WTC11 (cell line): ENCODE measurements at regions of chr10 and their contacts with region 1.

Region 1: GRCh38 chr10:69092959-69093850 is 5.3 kb downstream of the SRGN start:
- DNase-seq: peak; percentile 74
- ATAC-seq: peak; percentile 94
- H3K4me3 Mint-ChIP-seq: no peak overlapping the region
- H3K27ac Mint-ChIP-seq: no peak overlapping the region
- H3K4me1 Mint-ChIP-seq: no peaks in the 10 kb centered on the region
- H3K27me3 Mint-ChIP-seq: no peaks in the 10 kb centered on the region
- CTCF ChIP-seq: peak; percentile 58

Region 2: DNA sequence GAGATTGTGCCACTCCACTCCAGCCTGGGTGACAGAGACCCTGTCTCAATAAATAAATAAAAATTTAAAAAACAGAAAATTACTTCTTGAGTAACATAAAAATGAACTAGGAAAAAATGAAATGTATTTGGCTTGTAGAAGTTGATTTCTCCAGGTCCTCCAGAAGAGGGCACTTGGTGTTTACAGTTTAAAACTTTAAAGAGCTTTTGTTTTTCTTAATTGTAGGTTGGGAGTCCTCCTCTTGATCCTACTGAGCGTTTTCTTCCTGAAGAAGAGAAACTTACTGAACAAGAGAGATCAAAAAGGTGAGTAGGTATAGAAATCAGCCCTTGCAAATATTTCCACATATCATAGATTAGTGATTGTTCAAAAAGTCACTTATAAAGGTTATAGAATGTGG is 88.4 kb before region 1 on chr10:
- CTCF ChIA-PET with region 1: interaction called, 14 read pairs
- POLR2A ChIA-PET with region 1: no interaction called
- DNase-seq: no peak
- ATAC-seq: no peak
- H3K4me3 Mint-ChIP-seq: no peak overlapping the region
- H3K27ac Mint-ChIP-seq: no peak overlapping the region
- H3K4me1 Mint-ChIP-seq: no peaks in the 10 kb centered on the region
- H3K27me3 Mint-ChIP-seq: no peaks in the 10 kb centered on the region
- CTCF ChIP-seq: no peak